Heart left ventricle (tissue), 16 donors: ENCODE measurements at regions of chr1 and their contacts with region 1.

Region 1: GRCh38 chr1:94045465-94046056 is 75.4 kb downstream of the ABCA4 start:
- DNase-seq: peak; percentile 91 to 95 (median 91)
- ATAC-seq: peak; percentile 89 to 94 (median 91)
- H3K4me3 ChIP-seq: peak overlapping the region in 7 of 12 donors; percentile 12 to 34 (median 20)
- H3K27ac ChIP-seq: peak overlapping the region; percentile 77 to 97 (median 91)
- H3K4me1 ChIP-seq: peaks cover 11 to 81% (median 49%) of the 10 kb centered on the region in 12 donors
- H3K27me3 ChIP-seq: no peaks in the 10 kb centered on the region
- CTCF ChIP-seq: peak; percentile 50 to 94 (median 78)
- POLR2A ChIP-seq: peak in 1 of 2 donors; percentile 16

Region 2: DNA sequence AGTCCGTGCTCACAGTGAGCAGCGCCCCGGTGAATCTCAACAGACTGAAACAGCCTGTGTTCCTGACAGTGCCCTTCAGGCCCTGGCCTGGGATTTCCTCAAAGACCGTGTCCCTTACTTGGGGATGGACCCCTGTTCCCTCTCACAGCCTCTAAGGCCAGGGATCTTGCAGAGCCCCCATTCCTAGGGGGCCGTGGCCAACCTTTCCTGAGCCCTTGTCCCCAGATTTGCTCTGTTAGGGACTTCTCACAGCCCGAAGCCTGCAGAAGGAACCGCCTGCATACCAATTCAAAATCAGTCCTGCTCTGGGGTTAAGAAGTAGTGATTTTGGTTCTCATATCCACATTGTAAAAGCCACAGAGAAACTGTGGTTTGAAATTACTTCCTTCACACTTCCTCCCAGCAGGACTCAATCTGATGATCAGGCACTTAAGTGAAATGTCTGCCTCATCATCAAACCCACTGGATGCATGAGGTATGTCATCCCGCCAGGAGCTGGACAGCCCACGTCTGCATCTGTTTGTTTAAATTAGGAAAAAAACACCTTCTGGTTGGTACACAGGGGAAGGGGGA is 60.5 kb after region 1 on chr1:
- intact Hi-C with region 1: no loop called
- DNase-seq: peak in 1 of 5 donors; percentile 12
- ATAC-seq: peak in 1 of 4 donors; percentile 19
- H3K4me3 ChIP-seq: no peak overlapping the region
- H3K27ac ChIP-seq: no peak overlapping the region
- H3K4me1 ChIP-seq: peaks cover 0 to 10% (median 0%) of the 10 kb centered on the region in 12 donors
- H3K27me3 ChIP-seq: peaks cover 0 to 57% (median 0%) of the 10 kb centered on the region in 9 donors
- CTCF ChIP-seq: no peak
- POLR2A ChIP-seq: no peak

Region 3: GRCh38 chr1:94202241-94202640 is 156.7 kb after region 1 on chr1:
- intact Hi-C with region 1: loop called in 1 of 10 experiments (anchors 5 kb)
- DNase-seq: no peak
- ATAC-seq: no peak
- H3K4me3 ChIP-seq: no peak overlapping the region
- H3K27ac ChIP-seq: no peak overlapping the region
- H3K4me1 ChIP-seq: peaks cover 0 to 16% (median 3%) of the 10 kb centered on the region in 12 donors
- H3K27me3 ChIP-seq: no peaks in the 10 kb centered on the region
- CTCF ChIP-seq: no peak
- POLR2A ChIP-seq: no peak

Region 4: DNA sequence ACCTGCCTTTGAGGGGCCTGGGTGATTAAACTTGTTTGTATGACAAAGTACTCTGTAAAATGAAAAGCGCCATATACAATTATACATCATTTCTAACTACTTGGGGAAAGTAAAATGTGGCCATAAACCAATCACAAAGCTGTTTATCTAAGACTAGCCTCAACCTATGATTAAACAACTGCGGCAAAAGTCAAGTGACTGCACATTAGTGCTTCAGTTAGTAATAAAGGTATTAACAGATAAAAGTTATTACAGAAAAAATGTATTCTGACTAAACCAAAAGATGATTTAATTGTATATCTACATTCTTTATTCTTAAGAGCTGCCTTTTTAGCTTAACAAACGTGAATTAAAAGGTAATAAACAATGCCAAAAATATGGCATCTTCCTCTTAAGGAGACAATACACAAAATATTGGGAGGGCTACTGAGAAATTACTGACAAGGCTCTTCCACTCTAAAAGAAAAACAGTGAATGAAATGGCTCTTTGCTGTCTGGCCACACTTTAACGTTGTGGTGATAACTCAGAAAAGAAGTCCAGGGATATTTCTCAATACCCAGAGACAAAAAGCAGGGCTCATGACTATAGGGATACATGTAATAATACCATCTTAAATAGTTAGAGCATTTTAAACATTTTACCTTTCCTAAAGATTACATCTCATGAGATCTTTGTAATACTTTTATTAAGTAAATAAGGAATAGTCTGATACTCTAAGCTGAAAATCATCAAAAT is 183.2 kb after region 1 on chr1:
- intact Hi-C with region 1: no loop called
- DNase-seq: no peak
- ATAC-seq: peak in 3 of 4 donors; percentile 32 to 67 (median 44)
- H3K4me3 ChIP-seq: no peak overlapping the region
- H3K27ac ChIP-seq: peak overlapping the region in 5 of 12 donors; percentile 10 to 48 (median 21)
- H3K4me1 ChIP-seq: peaks cover 0 to 96% (median 67%) of the 10 kb centered on the region in 12 donors
- H3K27me3 ChIP-seq: no peaks in the 10 kb centered on the region
- CTCF ChIP-seq: no peak
- POLR2A ChIP-seq: no peak

Region 5: DNA sequence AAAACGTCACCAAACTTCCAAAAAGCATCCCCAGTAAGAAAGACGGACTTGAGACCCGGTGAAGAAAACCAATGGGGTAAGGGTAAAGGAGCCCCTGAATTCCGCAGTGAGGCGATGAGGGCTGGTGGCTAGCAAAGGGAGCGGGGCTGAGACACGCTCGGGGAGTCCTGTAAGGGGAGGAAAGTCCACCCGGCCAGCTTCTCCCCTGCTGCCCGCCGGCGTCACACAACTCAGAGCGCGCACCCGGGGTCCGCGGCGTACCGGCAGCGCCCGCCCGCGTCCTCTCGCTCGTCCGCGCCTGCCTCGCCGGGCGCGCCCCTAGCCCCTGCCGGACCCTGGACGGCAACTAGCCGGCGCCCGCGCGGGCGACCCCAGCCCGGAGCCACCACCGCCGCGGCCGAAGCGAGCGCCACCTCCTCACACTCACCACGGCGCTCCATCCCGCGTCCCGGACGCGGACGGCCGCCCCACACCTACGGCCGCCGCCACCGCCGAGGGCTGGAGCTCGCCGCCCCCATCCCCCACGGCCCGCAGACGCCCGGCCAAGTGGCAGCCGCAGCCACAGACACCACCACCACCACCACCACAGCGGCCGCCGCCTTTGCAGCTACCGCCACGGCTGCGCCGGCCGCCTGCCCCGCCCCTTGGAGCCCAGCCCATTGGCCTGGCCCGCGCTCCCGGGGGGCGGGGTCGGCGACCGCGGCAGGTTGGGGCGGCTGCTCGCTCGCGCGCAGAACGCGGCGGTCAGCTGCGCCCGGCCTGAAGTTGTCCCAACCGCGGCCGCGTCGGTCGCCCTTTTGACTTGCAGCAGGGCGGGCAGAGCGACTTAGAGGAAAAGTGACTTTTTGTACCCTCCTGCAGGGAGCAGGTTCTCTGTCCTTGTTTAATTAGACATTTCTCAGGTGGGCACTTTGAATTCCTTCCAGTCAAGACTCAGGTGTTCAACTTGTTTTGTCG is 201.9 kb after region 1 on chr1:
- intact Hi-C with region 1: loop called in 1 of 10 experiments (anchors 5 kb)
- DNase-seq: peak; percentile 84 to 91 (median 88)
- ATAC-seq: peak; percentile 83 to 98 (median 94)
- H3K4me3 ChIP-seq: peak overlapping the region; percentile 54 to 98 (median 72)
- H3K27ac ChIP-seq: peak overlapping the region; percentile 78 to 95 (median 88)
- H3K4me1 ChIP-seq: peaks cover 0 to 15% (median 0%) of the 10 kb centered on the region in 12 donors
- H3K27me3 ChIP-seq: peaks cover 0 to 16% (median 0%) of the 10 kb centered on the region in 9 donors
- CTCF ChIP-seq: peak in 2 of 12 donors; percentile 9 to 26
- POLR2A ChIP-seq: peak in 1 of 2 donors; percentile 95

Region 6: GRCh38 chr1:94329986-94330385 is 284.4 kb after region 1 on chr1:
- intact Hi-C with region 1: loop called in 5 of 10 experiments (anchors 1 to 5 kb)
- DNase-seq: peak in 1 of 5 donors; percentile 22
- ATAC-seq: peak in 3 of 4 donors; percentile 6 to 46 (median 40)
- H3K4me3 ChIP-seq: peak overlapping the region in 5 of 12 donors; percentile 5 to 28 (median 13)
- H3K27ac ChIP-seq: peak overlapping the region in 10 of 12 donors; percentile 38 to 79 (median 76)
- H3K4me1 ChIP-seq: peaks cover 6 to 72% (median 52%) of the 10 kb centered on the region in 12 donors
- H3K27me3 ChIP-seq: peaks cover 0 to 18% (median 0%) of the 10 kb centered on the region in 9 donors
- CTCF ChIP-seq: peak in 11 of 12 donors; percentile 23 to 70 (median 54)
- POLR2A ChIP-seq: no peak